Aorta (tissue), 5 donors: ENCODE measurements at regions of chr7 and their contacts with region 1.

Region 1: DNA sequence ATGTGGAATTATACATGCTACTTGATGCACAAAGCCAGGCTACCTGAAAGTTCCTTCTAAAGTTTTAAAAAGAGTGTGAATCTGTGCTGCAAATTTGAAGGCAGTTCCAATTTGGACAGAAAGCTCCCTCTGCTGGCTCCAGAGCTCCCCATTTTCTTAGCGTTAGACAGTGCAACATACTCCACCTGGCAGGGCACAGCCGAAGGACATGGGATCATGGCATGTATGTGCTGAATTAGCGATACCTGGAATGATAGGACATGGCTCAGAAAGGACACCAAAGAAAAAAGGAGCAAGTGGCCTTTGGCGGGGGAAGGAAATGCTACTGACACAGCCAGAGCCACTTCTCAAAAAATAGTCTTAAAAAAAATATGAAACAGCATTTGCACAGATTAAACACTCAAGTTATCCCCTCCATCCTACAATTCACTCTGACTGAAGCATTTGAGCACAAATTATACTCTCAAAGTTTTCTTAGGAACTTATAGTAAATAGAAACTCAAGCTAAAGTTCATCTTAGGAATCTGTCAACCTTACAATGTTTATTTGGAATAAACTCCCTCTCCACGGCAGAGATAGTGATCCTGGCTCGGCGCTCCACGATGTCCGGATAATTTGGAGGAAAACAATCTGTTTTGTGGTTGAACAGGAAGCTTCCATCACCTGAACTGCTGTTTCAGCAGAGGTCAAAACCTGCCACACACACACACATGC is 80.0 kb downstream of the C7orf25 start:
- DNase-seq: peak; percentile 50 to 71
- ATAC-seq: peak; percentile 72
- H3K4me3 ChIP-seq: no peak overlapping the region
- H3K27ac ChIP-seq: no peak overlapping the region
- H3K4me1 ChIP-seq: no peaks in the 10 kb centered on the region
- H3K27me3 ChIP-seq: no peaks in the 10 kb centered on the region

Region 2: GRCh38 chr7:41940760-41941343 is 891.0 kb before region 1 on chr7:
- intact Hi-C with region 1: loop called (anchors 5 kb)
- DNase-seq: peak; percentile 71 to 85
- ATAC-seq: peak; percentile 89
- H3K4me3 ChIP-seq: no peak overlapping the region
- H3K27ac ChIP-seq: no peak overlapping the region
- H3K4me1 ChIP-seq: no peaks in the 10 kb centered on the region
- H3K27me3 ChIP-seq: no peaks in the 10 kb centered on the region

Region 3: GRCh38 chr7:42502022-42502421 is 329.9 kb before region 1 on chr7:
- intact Hi-C with region 1: loop called in 1 of 2 experiments (anchors 10 kb)
- DNase-seq: no peak
- ATAC-seq: no peak
- H3K4me3 ChIP-seq: no peak overlapping the region
- H3K27ac ChIP-seq: no peak overlapping the region
- H3K4me1 ChIP-seq: no peaks in the 10 kb centered on the region
- H3K27me3 ChIP-seq: no peaks in the 10 kb centered on the region